ENCODE measurements at regions of chr2 and their contacts with region 1.

Region 1: DNA sequence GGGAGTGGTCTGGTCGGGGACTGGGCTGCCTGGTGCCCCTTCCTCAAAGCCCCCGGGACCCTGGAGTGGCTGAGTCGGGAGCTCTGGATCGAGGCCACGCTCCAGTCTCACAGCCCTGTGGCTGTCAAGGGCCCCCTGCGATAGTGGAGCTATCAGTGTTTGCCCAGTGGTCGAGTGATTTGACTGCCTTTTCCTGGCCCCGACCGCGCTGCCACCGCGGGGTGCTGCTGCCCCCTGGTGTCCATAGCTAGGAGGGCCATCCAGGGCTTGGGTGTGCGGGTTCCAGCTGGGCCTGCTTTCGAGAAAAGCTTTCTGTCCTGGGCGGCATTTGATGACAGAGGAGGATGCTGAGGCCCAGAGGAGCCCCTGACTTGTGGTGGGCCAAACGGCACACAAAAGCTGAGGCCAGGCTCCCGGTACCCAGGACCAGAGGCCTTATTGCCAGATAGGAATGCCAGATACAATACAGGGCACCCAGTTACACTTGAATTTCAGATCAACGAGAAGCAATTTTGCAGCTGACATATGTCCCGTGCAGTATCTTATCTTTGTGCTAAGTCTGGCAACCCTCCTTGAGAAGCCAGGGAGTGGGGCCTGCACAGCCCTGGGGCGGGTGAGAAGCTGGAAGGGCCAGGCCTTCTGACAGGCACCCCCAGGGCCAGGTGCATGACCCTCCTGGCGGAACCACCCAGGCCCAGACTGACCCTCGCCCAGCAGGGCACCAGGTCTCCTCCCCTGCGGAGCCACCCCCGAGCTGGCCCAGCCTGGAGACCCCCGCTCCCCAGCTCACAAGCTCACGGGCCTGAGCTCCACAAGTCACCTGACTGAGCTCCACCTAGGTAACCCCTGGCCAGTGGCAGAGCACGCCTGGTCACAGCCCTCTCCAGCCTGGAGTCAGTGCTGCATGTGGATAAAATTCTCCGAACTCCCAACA is 13.0 kb downstream of the ODC1 start:
- DNase-seq: peak; percentile 74
- H3K4me3 ChIP-seq: no peak overlapping the region
- H3K27ac ChIP-seq: no peak overlapping the region
- H3K4me1 ChIP-seq: no peaks in the 10 kb centered on the region
- H3K27me3 ChIP-seq: no peaks in the 10 kb centered on the region
- CTCF ChIP-seq: peak; percentile 96
- POLR2A ChIP-seq: no peak

Region 2: DNA sequence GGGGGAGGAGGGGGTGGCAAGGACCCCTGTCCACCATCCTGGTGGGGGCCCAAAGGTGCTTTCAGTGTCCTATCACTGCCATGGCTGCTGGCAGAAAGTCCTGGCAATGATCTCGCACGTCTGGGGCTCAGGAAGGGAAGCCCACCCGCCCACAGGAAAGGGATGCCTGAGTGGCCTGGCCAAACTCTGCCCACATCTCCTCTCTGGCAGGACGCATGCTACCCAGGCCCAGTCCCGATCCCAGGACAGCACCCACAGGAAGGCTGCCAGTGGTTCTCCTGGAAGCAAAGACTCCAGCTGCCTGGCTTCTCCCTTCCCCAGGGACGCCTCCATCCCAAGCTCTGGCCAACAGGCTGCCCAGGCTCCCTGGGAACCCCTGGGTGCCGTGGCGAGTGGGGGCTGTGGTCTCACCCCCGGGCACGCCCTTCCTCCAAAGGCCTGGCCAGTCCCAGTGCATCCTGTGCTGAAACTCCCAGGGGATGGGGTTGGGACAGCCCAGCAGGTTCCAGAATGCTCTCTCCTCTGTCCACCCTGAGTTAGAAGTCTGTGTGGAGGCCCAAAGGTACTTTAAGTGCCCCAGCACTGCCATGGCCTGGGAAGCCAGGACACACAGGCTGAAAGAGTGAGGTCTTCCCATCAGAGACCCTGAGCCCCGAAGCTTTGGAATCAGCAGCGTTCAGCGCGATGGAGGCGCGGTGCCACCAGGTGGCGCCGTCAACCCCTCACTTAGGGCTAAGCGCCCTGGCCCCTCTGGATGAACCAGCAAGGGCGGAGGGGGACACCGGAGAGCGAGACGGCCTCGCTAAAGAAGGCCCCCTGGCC is 621.6 kb before region 1 on chr2:
- CTCF ChIA-PET with region 1: interaction called, 19 read pairs
- POLR2A ChIA-PET with region 1: no interaction called
- dilution Hi-C with region 1: no loop called
- intact Hi-C with region 1: loop called (anchors 5 kb)
- DNase-seq: peak; percentile 61
- H3K4me3 ChIP-seq: no peak overlapping the region
- H3K27ac ChIP-seq: no peak overlapping the region
- H3K4me1 ChIP-seq: peaks cover 6% of the 10 kb centered on the region
- H3K27me3 ChIP-seq: no peaks in the 10 kb centered on the region
- CTCF ChIP-seq: peak; percentile 96 to 97
- POLR2A ChIP-seq: no peak

Region 3: DNA sequence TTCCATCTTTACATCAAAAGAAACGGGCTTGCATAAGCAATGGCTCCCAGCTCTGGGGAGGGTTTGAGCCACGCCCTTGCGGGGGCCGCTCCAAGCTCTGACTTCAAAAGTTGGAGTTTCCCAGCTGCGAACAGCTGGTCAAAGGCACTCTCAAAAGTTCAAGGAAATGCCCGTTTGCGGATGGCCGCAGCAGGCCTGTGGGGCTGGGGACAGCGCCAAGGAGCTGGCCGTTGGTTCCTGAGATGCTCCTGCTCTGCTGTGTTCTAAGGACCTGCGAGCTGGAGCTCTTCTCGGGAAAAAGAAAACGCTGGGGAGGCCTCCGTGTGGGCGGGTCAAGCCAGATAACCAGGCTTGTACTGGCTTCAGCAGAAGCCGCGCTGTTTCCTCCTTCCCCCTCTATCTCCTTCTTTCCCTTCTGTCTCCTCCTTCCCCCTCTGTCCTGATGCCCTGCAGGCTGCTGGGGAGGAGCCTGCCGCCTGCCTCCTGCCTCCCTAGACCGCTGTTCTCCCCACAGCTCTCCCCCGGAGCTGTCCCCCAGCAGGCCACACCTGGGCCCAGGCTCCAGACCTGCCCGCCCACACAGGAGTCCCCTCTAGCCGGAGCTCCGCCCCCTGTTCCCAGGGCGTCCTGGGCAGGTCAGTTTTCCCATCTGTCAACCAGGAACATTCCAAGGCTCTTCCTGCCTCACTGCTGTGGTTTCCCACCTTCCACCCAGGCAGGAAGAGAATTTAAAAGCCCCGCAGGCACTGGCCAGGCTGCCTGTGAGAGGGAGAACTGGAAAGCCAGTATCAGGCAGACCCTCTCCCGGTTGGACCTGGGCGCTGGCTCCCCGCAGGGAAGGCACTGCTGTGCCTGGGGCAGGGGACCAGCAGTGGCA is 377.7 kb before region 1 on chr2:
- CTCF ChIA-PET with region 1: interaction called, 12 read pairs
- POLR2A ChIA-PET with region 1: no interaction called
- dilution Hi-C with region 1: no loop called
- intact Hi-C with region 1: no loop called
- DNase-seq: peak; percentile 31
- H3K4me3 ChIP-seq: no peak overlapping the region
- H3K27ac ChIP-seq: no peak overlapping the region
- H3K4me1 ChIP-seq: peaks cover 4% of the 10 kb centered on the region
- H3K27me3 ChIP-seq: no peaks in the 10 kb centered on the region
- CTCF ChIP-seq: no peak
- POLR2A ChIP-seq: no peak

Region 4: DNA sequence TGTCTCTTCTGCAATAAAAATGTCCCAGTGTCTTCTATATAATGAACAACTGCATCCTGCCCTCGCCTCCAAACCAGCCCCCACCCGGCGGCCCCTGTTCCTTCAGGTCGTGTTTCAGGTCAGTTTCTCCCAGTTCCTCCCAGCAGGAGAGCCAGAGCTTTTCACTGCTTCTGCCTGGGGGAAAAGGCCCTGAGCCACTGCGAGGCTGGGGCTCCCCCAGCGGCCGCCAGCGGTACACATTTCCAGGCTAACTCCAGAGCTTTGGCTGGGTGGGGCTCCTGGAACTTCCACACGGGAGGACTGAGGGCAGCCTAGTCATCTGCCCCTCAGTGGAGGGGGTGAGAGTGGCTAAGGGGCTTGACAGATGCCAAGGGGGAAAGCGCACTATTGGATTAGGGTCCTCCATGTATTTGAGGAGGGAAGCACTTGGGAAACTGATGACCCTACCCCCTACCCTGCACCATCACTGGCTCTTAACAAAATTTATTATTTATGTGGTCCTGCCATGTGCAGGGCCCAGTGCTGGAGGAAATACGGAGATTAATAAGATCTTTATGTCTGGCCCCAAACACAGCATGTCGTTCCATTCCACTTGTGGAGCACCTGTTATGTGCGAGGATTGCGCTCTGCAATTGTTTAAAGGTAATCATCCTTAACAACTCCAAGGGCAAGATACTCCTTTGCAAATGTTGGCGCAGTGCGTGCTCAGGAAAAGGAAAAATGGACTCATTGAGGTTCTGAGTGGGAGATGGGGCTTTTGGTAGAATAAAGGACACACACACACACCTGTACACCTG is 337.6 kb before region 1 on chr2:
- CTCF ChIA-PET with region 1: interaction called, 11 read pairs
- POLR2A ChIA-PET with region 1: no interaction called
- dilution Hi-C with region 1: no loop called
- intact Hi-C with region 1: no loop called
- DNase-seq: peak; percentile 54
- H3K4me3 ChIP-seq: no peak overlapping the region
- H3K27ac ChIP-seq: no peak overlapping the region
- H3K4me1 ChIP-seq: no peaks in the 10 kb centered on the region
- H3K27me3 ChIP-seq: peaks cover 0 to 1% of the 10 kb centered on the region in 2 experiments
- CTCF ChIP-seq: peak; percentile 87 to 95
- POLR2A ChIP-seq: no peak

Region 5: DNA sequence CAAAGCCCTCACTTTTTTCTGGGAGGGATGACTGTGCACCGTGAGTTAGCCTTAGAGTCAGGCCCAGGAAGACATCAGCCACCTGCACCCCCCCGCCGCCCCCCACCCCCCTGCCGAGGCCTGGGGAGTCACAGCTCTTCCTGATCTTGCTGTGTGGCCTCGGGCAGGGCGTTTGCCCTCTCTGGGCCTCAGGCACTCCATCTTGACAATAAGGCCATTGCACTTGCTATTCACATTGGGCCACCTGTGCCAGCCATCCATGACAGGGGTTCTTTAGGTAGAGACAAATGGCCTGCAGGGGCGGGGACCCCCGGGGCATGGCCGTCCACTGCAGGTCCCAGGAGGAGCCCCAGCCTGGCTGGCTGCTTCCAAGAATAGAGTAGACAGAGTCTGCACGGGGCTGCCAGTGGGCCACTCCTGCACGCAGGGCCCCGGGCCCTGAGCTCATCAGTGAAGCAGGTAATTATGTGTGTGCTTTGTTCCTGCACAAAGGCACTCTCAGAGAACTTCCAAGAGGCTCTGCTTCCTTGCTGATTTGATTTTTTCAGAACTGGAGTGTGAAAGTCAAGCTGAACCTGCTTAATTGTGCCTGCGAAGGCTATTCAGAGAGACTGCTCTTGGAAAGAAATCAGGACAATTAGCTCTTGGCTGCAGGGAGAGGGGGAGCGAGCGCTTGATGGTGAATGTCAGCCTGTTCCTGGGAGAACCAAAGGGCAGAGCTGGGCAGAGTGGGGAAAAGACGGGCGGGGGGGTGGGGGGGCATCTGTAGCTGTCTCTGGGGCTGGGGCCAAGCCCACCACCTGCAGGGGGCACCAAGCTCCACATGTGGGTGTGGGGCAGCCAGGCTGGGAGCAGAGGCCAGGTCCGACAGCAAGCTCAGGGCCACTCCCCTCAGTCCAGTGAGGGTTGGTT is 272.3 kb before region 1 on chr2:
- CTCF ChIA-PET with region 1: interaction called, 14 read pairs
- POLR2A ChIA-PET with region 1: interaction called, 3 read pairs
- dilution Hi-C with region 1: no loop called
- intact Hi-C with region 1: no loop called
- DNase-seq: peak; percentile 26
- H3K4me3 ChIP-seq: no peak overlapping the region
- H3K27ac ChIP-seq: peak overlapping the region; percentile 97
- H3K4me1 ChIP-seq: peaks cover 57% of the 10 kb centered on the region
- H3K27me3 ChIP-seq: no peaks in the 10 kb centered on the region
- CTCF ChIP-seq: peak in 1 of 2 donors; percentile 18
- POLR2A ChIP-seq: no peak

Region 6: GRCh38 chr2:10302479-10303180 is 132.5 kb before region 1 on chr2 and contains the start of gene HPCAL1:
- CTCF ChIA-PET with region 1: interaction called, 37 read pairs
- POLR2A ChIA-PET with region 1: no interaction called
- dilution Hi-C with region 1: no loop called
- intact Hi-C with region 1: loop called (anchors 1 kb)
- DNase-seq: peak; percentile 81
- H3K4me3 ChIP-seq: peak within 1 kb of the TSS; percentile 67 to 78 (median 72)
- H3K27ac ChIP-seq: peak within 1 kb of the TSS; percentile 27
- H3K4me1 ChIP-seq: peaks cover 22% of the 10 kb centered on the region
- H3K27me3 ChIP-seq: no peaks in the 10 kb centered on the region
- CTCF ChIP-seq: peak; percentile 26 to 53
- POLR2A ChIP-seq: peak; percentile 89
- total RNA-seq, gene HPCAL1: 68.1 and 77.4 TPM in 2 replicates

Region 7: DNA sequence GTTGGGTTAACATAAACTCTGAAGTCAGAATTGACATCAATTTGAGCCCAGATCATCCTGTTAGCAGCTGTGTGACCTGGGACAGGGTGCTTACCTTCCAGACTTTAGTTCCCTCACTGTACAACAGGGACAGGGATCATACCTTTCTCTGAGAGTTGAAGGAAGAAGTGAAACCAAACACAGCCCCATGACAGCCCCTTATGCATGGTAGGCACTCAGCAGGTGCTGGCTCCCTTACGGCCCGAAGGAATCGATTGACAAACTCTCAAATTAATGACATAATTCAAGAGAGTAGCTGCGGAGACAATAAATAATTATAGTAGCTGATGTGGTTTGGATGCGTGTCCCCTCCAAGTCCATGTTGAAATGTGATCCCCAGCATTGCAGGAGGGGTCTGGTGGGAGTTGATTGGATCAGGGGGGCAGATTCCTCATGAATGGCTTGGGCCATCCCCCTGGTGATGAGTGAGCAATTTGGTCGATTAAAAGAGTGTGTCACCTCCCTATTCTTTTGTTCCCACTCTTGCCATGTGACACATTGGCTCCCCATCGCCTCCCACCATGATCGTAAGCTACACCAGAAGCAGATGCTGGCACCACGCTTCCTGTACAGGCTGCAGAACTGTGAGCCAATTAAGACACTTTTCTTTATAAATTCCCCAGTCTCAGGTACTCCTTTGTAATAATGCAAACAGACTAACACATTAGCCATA is 59.4 kb before region 1 on chr2:
- CTCF ChIA-PET with region 1: no interaction called
- POLR2A ChIA-PET with region 1: no interaction called
- dilution Hi-C with region 1: no loop called
- intact Hi-C with region 1: no loop called
- DNase-seq: no peak
- H3K4me3 ChIP-seq: no peak overlapping the region
- H3K27ac ChIP-seq: no peak overlapping the region
- H3K4me1 ChIP-seq: no peaks in the 10 kb centered on the region
- H3K27me3 ChIP-seq: no peaks in the 10 kb centered on the region
- CTCF ChIP-seq: no peak
- POLR2A ChIP-seq: no peak

Region 8: GRCh38 chr2:10659898-10660568 is 224.9 kb after region 1 on chr2:
- CTCF ChIA-PET with region 1: interaction called, 58 read pairs
- POLR2A ChIA-PET with region 1: no interaction called
- dilution Hi-C with region 1: no loop called
- intact Hi-C with region 1: loop called (anchors 1 kb)
- DNase-seq: peak; percentile 74
- H3K4me3 ChIP-seq: no peak overlapping the region
- H3K27ac ChIP-seq: no peak overlapping the region
- H3K4me1 ChIP-seq: peaks cover 4% of the 10 kb centered on the region
- H3K27me3 ChIP-seq: no peaks in the 10 kb centered on the region
- CTCF ChIP-seq: peak; percentile 79 to 81
- POLR2A ChIP-seq: no peak

Measured in endothelial cell of umbilical vein (primary cell).